Heart left ventricle (tissue), 16 donors: ENCODE measurements at regions of chr3 and their contacts with region 1.

Region 1: DNA sequence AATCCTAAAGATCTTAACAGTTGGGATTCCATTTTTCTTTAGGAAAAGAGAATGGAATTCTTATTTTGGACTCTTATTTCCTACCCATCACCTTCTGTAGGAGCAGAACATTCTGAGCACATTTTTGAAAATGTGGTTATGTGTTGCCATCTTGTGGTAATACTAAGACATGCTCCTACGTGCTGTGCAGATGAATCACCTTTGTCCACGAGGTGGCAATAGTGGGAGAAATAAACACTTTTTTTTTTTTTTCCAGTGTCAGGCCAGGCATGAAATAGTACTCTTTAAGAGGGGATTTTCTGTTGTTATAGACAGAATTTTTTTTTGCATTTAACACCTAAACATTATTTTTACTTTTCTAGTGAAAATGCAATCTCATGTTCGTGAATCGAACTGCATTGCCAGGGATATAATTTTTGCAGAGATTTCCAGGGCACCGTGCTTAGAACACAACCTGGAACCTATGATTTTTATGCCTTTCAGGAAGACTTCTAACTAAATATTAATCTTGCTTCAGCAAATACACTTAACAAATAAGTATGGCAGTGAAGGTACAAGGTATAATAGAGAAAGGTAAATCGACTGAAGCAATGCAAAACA is 196.6 kb downstream of the GAP43 start:
- DNase-seq: peak in 4 of 5 donors; percentile 51 to 71 (median 60)
- ATAC-seq: peak in 3 of 4 donors; percentile 77 to 90 (median 81)
- H3K4me3 ChIP-seq: no peak overlapping the region
- H3K27ac ChIP-seq: no peak overlapping the region
- H3K4me1 ChIP-seq: no peaks in the 10 kb centered on the region
- H3K27me3 ChIP-seq: no peaks in the 10 kb centered on the region
- CTCF ChIP-seq: peak; percentile 86 to 100 (median 92)
- POLR2A ChIP-seq: no peak

Region 2: GRCh38 chr3:113838631-113839209 is 1981.2 kb before region 1 on chr3 and contains the start of gene GRAMD1C:
- intact Hi-C with region 1: loop called in 2 of 10 experiments (anchors 10 kb)
- DNase-seq: peak; percentile 85 to 94 (median 86)
- ATAC-seq: peak; percentile 68 to 100 (median 98)
- H3K4me3 ChIP-seq: peak within 1 kb of the TSS; percentile 33 to 66 (median 56)
- H3K27ac ChIP-seq: peak within 1 kb of the TSS in 7 of 12 donors; percentile 5 to 61 (median 49)
- H3K4me1 ChIP-seq: peaks cover 0 to 8% (median 0%) of the 10 kb centered on the region in 12 donors
- H3K27me3 ChIP-seq: no peaks in the 10 kb centered on the region
- CTCF ChIP-seq: peak; percentile 71 to 94 (median 87)
- POLR2A ChIP-seq: peak in 1 of 2 donors; percentile 21
- total RNA-seq, gene GRAMD1C: 0.49 to 5.6 (median 1.2) TPM

Region 3: GRCh38 chr3:113844622-113845222 is 1975.2 kb before region 1 on chr3:
- intact Hi-C with region 1: loop called in 2 of 10 experiments (anchors 10 kb)
- DNase-seq: no peak
- ATAC-seq: no peak
- H3K4me3 ChIP-seq: no peak overlapping the region
- H3K27ac ChIP-seq: no peak overlapping the region
- H3K4me1 ChIP-seq: no peaks in the 10 kb centered on the region
- H3K27me3 ChIP-seq: no peaks in the 10 kb centered on the region
- CTCF ChIP-seq: peak; percentile 32 to 70 (median 48)
- POLR2A ChIP-seq: no peak